ENCODE measurements at regions of chr11 and their contacts with region 1.

Region 1: DNA sequence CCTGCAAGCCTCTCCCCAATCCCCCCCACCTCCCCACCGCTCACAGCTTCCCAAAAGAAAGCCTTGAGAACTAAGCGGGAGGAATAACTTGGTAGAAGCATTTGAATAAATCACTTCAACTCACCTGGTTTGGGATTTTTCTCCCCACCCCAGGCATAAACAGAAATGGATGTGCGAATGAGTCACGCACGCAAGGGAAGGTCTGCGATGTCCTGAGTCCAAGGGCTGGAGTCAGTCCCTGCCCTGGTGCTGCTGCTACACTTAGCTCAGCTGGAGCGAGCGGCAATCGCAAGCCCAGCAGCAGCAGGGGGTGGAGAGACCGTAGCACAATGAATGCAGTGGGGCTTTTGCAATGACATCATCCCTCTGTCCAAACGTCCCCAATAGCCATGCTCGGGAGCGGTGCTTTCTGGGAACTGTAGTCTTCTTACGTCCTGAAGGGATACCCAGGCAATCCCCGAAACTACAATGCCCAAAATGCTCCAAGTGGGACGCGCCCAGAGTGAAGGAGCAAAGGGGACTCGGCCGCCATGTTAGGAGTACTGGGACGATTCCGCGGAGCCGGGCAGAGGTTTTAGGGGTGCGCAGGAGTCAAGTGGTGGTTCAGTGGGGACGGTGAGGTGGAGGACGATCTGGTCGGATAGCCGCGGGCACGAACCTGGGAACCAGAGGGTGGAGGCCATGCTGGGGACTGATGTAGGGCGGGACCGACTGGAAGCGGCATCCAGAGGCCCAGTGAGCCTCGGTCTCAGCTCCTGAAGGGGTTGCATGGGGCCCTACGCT is at the start of gene RAB30:
- DNase-seq: peak; percentile 99
- H3K4me3 ChIP-seq: peak within 1 kb of the TSS; percentile 62 to 75 (median 69)
- H3K27ac ChIP-seq: peak within 1 kb of the TSS; percentile 91 to 95 (median 92)
- H3K4me1 ChIP-seq: peaks cover 0 to 46% (median 40%) of the 10 kb centered on the region in 4 donors
- H3K27me3 ChIP-seq: no peaks in the 10 kb centered on the region
- CTCF ChIP-seq: no peak
- EP300 ChIP-seq: no peak
- POLR2A ChIP-seq: peak; percentile 76 to 84
- total RNA-seq, gene RAB30: 22.2 to 29.9 (median 26.3) TPM

Region 2: GRCh38 chr11:82900277-82901164 is 171.2 kb before region 1 on chr11 and contains the start of gene PRCP:
- intact Hi-C with region 1: loop called (anchors 5 kb)
- DNase-seq: peak; percentile 97
- H3K4me3 ChIP-seq: peak within 1 kb of the TSS; percentile 57 to 70 (median 60)
- H3K27ac ChIP-seq: peak within 1 kb of the TSS; percentile 87 to 96 (median 94)
- H3K4me1 ChIP-seq: peaks cover 0 to 31% (median 26%) of the 10 kb centered on the region in 4 donors
- H3K27me3 ChIP-seq: no peaks in the 10 kb centered on the region
- CTCF ChIP-seq: no peak
- EP300 ChIP-seq: peak in 3 of 4 donors; percentile 41 to 59 (median 42)
- POLR2A ChIP-seq: peak; percentile 66 to 69
- total RNA-seq, gene PRCP: 27.4 to 40.2 (median 35.5) TPM

Region 3: DNA sequence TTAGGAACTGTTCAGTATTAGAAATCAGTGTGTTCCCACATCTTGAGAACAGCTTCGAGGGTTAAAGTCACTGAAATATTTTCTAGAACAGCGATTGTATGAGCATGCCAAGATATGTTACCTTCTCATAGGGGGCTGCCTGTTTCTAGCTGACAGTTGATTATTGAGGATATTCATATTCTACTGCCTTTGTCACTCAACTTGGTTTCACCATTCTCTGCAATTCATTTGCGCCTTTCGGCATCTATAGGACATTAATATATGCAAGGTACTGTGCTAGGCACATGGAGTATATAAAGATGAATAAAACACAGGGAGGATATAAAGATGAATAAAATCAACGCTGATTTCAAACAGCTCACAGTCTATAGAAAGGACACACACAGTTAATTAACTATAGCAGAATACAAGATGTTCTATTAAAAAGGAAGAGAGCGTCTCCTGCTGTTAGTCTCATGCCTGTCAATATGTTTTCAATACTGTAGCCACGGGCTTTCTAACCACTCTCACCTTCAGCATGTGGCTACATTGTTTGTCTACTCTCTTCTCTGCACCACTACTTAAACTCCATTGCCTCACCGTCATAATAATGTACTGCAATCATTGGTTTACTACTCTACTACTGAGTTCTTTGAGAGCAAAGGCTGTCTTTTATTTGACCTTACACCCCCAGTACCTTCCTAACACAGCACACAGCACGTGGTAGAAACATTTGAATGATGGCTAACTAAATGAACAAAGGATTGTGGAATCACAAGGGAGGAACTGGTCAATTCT is 81.9 kb before region 1 on chr11:
- intact Hi-C with region 1: loop called (anchors 5 kb)
- DNase-seq: no peak
- H3K4me3 ChIP-seq: no peak overlapping the region
- H3K27ac ChIP-seq: no peak overlapping the region
- H3K4me1 ChIP-seq: peaks cover 0 to 39% (median 36%) of the 10 kb centered on the region in 4 donors
- H3K27me3 ChIP-seq: no peaks in the 10 kb centered on the region
- CTCF ChIP-seq: no peak
- EP300 ChIP-seq: no peak
- POLR2A ChIP-seq: no peak

Region 4: GRCh38 chr11:83124636-83125424 is 53.1 kb after region 1 on chr11:
- intact Hi-C with region 1: no loop called
- DNase-seq: no peak
- H3K4me3 ChIP-seq: no peak overlapping the region
- H3K27ac ChIP-seq: no peak overlapping the region
- H3K4me1 ChIP-seq: no peaks in the 10 kb centered on the region
- H3K27me3 ChIP-seq: no peaks in the 10 kb centered on the region
- CTCF ChIP-seq: no peak
- EP300 ChIP-seq: no peak
- POLR2A ChIP-seq: no peak

Region 5: DNA sequence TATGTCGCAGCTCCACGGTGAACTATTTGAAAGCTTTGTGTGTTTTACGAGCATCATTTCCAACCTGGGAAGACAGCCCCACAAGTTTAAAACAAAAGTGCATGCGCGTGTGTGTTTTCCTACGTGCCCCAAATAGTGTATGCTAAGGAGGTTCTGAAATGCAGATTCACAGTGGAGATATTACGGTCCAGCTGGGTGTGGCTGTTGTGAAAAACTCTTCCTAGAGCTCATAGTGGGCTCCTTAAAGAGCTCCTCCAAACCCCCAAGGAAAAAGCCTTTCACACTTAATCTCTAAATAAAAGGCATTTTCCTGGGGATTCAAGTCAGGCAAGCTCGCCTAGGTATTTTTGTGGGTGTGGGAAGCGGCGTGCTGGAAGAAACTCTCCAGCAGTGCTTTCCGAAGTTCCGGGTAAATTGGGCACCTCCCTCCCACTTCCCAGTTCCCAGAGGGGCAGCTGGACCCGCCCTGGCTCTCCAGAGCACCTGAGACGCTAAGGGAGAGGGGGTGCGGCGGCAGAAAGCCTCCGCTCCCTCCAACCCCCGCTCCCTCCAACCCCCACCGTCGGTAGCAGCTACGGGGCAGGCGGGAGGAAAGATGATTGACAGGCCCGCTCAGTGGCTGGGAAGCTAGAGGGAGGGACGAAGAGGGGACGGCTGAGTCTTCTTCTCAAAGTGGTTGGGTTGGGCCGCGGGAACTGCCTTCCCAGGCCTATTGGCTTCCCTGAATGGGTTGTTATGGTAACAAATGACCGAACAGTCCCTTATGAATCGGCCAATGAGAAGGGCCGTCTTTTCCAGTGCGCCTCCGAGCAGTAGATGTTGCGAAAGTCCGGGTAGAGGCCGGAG is 84.6 kb after region 1 on chr11:
- intact Hi-C with region 1: loop called (anchors 1 kb)
- DNase-seq: peak; percentile 100
- H3K4me3 ChIP-seq: peak overlapping the region; percentile 54 to 72 (median 63)
- H3K27ac ChIP-seq: peak overlapping the region; percentile 85 to 99 (median 96)
- H3K4me1 ChIP-seq: peaks cover 0 to 30% (median 20%) of the 10 kb centered on the region in 4 donors
- H3K27me3 ChIP-seq: no peaks in the 10 kb centered on the region
- CTCF ChIP-seq: no peak
- EP300 ChIP-seq: no peak
- POLR2A ChIP-seq: peak; percentile 85 to 93

Region 6: GRCh38 chr11:83285771-83286528 is 214.2 kb after region 1 on chr11 and contains the start of gene CCDC90B:
- intact Hi-C with region 1: loop called (anchors 5 kb)
- DNase-seq: peak; percentile 98
- H3K4me3 ChIP-seq: peak within 1 kb of the TSS; percentile 57 to 80 (median 72)
- H3K27ac ChIP-seq: peak within 1 kb of the TSS; percentile 95 to 97 (median 96)
- H3K4me1 ChIP-seq: peaks cover 0 to 46% (median 40%) of the 10 kb centered on the region in 4 donors
- H3K27me3 ChIP-seq: no peaks in the 10 kb centered on the region
- CTCF ChIP-seq: no peak
- EP300 ChIP-seq: no peak
- POLR2A ChIP-seq: peak; percentile 67 to 73
- total RNA-seq, gene CCDC90B: 28.9 to 49.2 (median 42.6) TPM

Measured in sigmoid colon (tissue), 7 donors.